MCF 10A (cell line): ENCODE measurements at regions of chr6 and their contacts with region 1.

Region 1: DNA sequence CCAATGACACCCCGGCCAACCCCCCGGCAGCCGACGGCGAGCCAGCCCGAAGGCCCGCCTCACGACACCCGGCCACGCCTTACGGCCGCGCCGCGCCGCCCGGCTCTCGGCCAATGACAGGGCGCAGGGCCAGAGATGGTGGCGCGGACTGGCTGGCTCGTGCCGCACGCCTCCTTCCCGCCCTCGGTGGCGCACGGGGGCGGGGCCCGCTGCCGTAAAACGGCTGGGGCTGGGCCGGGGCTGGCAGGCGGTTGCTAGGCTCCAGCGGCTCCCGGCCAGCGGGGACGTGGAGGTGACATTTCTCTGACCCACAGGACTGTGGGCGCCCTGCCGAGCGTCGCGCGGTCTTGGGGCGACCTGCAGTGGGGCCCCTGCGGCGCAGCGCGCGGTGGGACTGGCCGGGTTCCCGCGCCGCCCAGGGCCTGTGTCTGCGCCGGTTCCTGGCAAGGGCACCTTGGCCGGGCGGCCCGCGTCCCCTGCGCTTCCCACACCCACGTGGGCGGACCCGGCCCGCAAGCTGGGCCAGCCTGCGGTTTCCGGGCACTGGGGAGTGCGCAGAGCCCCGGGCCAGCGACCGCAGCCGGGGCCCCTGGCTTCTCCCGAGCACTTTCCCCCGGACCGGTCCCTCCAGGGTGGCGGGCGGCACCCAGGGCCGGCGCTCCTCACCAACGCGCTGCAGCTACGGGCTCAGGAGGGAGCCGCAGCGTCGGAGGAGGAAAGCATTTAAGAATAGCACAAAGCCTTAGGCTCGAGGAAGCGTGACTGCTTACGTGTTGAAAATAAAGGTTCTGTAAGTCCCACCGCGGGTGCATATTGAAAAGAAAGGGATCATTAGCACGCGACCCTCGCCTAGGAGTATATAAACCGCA is at the start of gene MPC1:
- DNase-seq: peak; percentile 96
- H3K4me3 Mint-ChIP-seq: peak within 1 kb of the TSS; percentile 85
- H3K27ac Mint-ChIP-seq: peak within 1 kb of the TSS; percentile 88
- H3K4me1 Mint-ChIP-seq: no peaks in the 10 kb centered on the region
- H3K27me3 Mint-ChIP-seq: no peaks in the 10 kb centered on the region
- CTCF ChIP-seq: no peak
- total RNA-seq, gene MPC1: 31.8 and 33.1 TPM in 2 replicates

Region 2: DNA sequence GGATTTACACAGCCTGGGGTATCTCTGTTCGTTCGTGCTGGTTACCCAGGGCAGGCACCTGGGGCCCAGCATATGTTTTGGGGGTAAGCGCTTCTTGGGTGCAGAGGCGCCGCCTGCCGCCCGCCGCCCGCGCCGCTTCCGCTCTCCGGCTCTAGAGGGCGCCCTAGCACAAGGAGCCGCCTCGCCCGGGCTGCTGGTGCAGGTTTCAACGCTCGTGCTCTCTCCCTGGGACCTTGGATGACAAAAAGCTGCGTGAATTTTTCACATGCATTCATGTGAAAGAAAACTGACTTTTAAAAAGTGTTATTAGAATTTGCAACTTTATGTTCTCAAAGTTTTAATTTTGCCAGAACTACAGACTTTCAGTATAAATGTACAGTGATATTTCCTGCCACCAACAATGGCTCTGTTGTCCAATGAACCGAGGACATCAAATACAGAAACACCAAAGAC is 107.4 kb before region 1 on chr6:
- CTCF ChIA-PET with region 1: interaction called, 57 read pairs
- POLR2A ChIA-PET with region 1: interaction called, 4 read pairs
- intact Hi-C with region 1: loop called (anchors 1 kb)
- DNase-seq: peak; percentile 63
- H3K4me3 Mint-ChIP-seq: no peak overlapping the region
- H3K27ac Mint-ChIP-seq: no peak overlapping the region
- H3K4me1 Mint-ChIP-seq: no peaks in the 10 kb centered on the region
- H3K27me3 Mint-ChIP-seq: peaks cover 16% of the 10 kb centered on the region
- CTCF ChIP-seq: peak; percentile 96

Region 3: GRCh38 chr6:166313255-166314070 is 69.7 kb before region 1 on chr6:
- CTCF ChIA-PET with region 1: interaction called, 7 read pairs
- POLR2A ChIA-PET with region 1: interaction called, 3 read pairs
- intact Hi-C with region 1: loop called (anchors 1 kb)
- DNase-seq: peak; percentile 58
- H3K4me3 Mint-ChIP-seq: no peak overlapping the region
- H3K27ac Mint-ChIP-seq: no peak overlapping the region
- H3K4me1 Mint-ChIP-seq: no peaks in the 10 kb centered on the region
- H3K27me3 Mint-ChIP-seq: no peaks in the 10 kb centered on the region
- CTCF ChIP-seq: peak; percentile 31

Region 4: GRCh38 chr6:166365221-166365620 is 17.9 kb before region 1 on chr6:
- CTCF ChIA-PET with region 1: interaction called, 14 read pairs
- POLR2A ChIA-PET with region 1: interaction called, 42 read pairs
- intact Hi-C with region 1: no loop called
- DNase-seq: no peak
- H3K4me3 Mint-ChIP-seq: no peak overlapping the region
- H3K27ac Mint-ChIP-seq: no peak overlapping the region
- H3K4me1 Mint-ChIP-seq: peaks cover 10% of the 10 kb centered on the region
- H3K27me3 Mint-ChIP-seq: no peaks in the 10 kb centered on the region
- CTCF ChIP-seq: no peak

Region 5: GRCh38 chr6:166474721-166475565 is 91.8 kb after region 1 on chr6:
- CTCF ChIA-PET with region 1: no interaction called
- POLR2A ChIA-PET with region 1: no interaction called
- intact Hi-C with region 1: no loop called
- DNase-seq: no peak
- H3K4me3 Mint-ChIP-seq: no peak overlapping the region
- H3K27ac Mint-ChIP-seq: peak overlapping the region; percentile 63
- H3K4me1 Mint-ChIP-seq: no peaks in the 10 kb centered on the region
- H3K27me3 Mint-ChIP-seq: no peaks in the 10 kb centered on the region
- CTCF ChIP-seq: no peak

Region 6: DNA sequence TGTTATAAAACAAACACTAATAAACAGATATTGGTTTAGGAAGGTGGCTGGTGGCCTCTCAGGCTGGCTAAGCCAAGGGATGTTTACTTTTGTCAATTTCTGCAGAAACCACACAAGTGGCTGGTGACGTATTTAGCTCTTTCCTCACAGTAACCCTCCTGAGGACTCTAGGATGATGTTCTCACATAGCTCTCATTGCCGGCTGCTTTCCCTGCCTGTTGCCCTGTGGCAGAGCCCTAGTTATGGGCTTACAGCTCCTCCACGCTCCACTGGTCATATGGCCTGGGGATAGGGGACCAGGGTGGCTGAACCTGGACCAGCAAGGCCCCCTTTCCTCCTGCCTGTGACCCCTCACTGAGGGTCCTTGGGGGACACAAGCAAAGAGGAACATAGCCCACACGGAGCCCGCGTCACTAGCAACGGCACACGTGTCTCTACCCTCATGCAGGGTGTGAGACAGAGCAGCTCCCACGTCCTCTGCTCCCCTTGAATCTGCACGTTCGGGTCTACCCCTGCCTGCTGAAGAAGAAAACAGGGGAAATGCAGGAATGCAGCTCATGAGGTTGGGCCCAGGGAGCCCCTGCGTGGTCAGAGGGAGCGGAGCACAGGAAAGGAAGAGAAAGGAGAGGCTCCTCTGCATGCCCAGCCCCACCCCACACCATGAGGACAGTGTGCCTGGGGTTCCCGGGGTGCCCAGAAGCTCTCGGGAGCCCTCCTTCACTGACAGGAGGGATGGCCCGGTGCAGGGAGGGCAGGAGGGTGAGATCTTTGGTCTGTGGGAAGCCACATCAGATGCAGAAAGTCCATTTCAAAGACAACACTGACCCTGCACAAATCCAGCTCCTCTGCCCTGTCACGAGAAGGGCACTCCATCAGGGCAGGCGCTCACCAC is 189.4 kb after region 1 on chr6:
- CTCF ChIA-PET with region 1: no interaction called
- POLR2A ChIA-PET with region 1: no interaction called
- intact Hi-C with region 1: no loop called
- DNase-seq: peak; percentile 65
- H3K4me3 Mint-ChIP-seq: no peak overlapping the region
- H3K27ac Mint-ChIP-seq: no peak overlapping the region
- H3K4me1 Mint-ChIP-seq: peaks cover 9% of the 10 kb centered on the region
- H3K27me3 Mint-ChIP-seq: no peaks in the 10 kb centered on the region
- CTCF ChIP-seq: no peak